ENCODE measurements at regions of chr1 and their contacts with region 1.

Region 1: GRCh38 chr1:1959840-1960479 is 40.9 kb upstream of the TMEM52 start:
- DNase-seq: peak; percentile 52 to 97 (median 80)
- H3K4me3 ChIP-seq: peak overlapping the region in 44 of 59 donors; percentile 6 to 54 (median 32)
- H3K27ac ChIP-seq: peak overlapping the region in 38 of 59 donors; percentile 1 to 83 (median 54)
- H3K27me3 ChIP-seq: peaks cover 0 to 28% (median 0%) of the 10 kb centered on the region in 45 donors
- CTCF ChIP-seq: peak; percentile 37 to 86 (median 73)

Region 2: DNA sequence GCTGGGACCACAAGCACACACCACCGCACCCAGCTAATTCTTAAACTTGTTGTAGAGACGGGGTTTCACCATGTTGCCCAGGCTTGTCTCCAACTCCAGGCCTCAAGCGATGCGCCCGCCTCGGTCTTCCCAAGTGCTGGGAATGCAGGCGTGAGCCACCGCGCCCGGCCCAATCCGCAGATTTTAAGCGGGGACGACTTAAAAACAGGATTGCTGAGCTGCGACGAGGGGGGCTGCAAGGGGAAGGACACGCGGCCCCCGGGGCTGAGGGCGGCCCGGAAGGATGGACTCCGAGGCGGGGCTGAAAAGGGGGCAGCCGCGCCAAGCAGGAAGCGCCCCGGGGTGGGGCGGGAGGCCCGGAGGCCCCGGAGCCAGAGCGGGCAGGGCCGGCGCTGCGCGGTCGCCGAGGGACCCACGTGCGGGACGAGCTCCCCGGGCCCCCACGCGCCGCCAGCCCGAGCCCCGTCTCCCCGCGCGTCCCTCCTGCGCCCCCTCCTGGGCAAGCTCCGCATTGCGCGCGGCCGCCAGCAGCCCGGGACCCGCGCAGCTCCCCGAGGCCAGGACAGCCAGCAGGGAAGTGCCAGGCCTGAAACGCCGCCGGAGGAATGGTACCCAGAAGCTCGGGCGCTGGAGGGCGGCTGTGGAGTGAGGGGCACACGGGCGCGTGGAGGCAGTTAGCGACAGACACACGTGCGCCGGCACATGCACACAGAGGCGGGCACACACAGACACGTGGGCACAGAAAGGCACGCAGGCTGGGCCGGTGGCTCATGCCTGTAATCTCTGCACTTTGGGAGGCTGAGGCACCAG is 84.8 kb after region 1 on chr1:
- intact Hi-C with region 1: loop called (anchors 1 to 2 kb)
- DNase-seq: peak in 9 of 10 donors; percentile 40 to 89 (median 63)
- H3K4me3 ChIP-seq: peak overlapping the region in 57 of 59 donors; percentile 14 to 61 (median 45)
- H3K27ac ChIP-seq: peak overlapping the region in 20 of 59 donors; percentile 11 to 77 (median 56)
- H3K27me3 ChIP-seq: peaks cover 0 to 27% (median 16%) of the 10 kb centered on the region in 45 donors
- CTCF ChIP-seq: peak in 55 of 56 donors; percentile 56 to 97 (median 83)

Region 3: GRCh38 chr1:2049718-2050427 is 89.9 kb after region 1 on chr1 and contains the start of gene PRKCZ:
- intact Hi-C with region 1: loop called in 1 of 2 experiments (anchors 2 kb)
- DNase-seq: peak in 1 of 10 donors; percentile 97
- H3K4me3 ChIP-seq: peak within 1 kb of the TSS in 57 of 59 donors; percentile 8 to 64 (median 47)
- H3K27ac ChIP-seq: peak within 1 kb of the TSS in 1 of 59 donors; percentile 70
- H3K27me3 ChIP-seq: peaks cover 0 to 51% (median 35%) of the 10 kb centered on the region in 45 donors
- CTCF ChIP-seq: no peak
- total RNA-seq, gene PRKCZ: 113 to 225 (median 176) TPM

Region 4: GRCh38 chr1:2151252-2151651 is 191.3 kb after region 1 on chr1:
- intact Hi-C with region 1: loop called in 1 of 2 experiments (anchors 10 kb)
- DNase-seq: no peak
- H3K4me3 ChIP-seq: no peak overlapping the region
- H3K27ac ChIP-seq: peak overlapping the region in 2 of 59 donors; percentile 12 to 36
- H3K27me3 ChIP-seq: no peaks in the 10 kb centered on the region
- CTCF ChIP-seq: no peak